ENCODE measurements at regions of chr4 and their contacts with region 1.

Region 1: DNA sequence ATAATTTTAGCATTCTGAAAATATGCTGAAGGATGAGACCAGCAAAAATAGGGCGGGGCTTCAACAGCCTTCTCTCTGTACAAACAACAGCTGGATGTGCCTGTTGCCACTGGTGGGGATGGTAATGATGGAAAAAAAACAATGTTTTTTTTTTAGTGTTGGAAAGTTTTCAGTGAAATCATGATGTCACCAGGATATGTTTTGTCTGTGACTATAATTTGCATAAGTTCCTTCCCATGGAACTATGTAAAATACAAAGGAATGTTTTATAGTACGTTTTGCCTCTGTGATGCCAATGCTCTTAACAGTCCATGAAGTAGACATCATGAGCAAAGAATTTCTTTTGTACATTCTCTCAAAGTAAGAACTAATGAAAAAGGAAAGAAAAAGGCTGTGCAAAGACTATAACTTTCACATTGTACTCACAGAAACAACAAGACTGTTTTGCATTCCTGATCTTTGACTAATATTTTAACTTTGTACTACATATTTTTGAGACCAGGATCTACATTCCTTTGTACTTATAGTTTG is 589.7 kb downstream of the SPRY1 start:
- DNase-seq: peak; percentile 99
- H3K4me3 ChIP-seq: no peak overlapping the region
- H3K27ac ChIP-seq: peak overlapping the region; percentile 98
- H3K4me1 ChIP-seq: peaks cover 41% of the 10 kb centered on the region
- H3K27me3 ChIP-seq: no peaks in the 10 kb centered on the region
- CTCF ChIP-seq: no peak
- POLR2A ChIP-seq: no peak

Region 2: DNA sequence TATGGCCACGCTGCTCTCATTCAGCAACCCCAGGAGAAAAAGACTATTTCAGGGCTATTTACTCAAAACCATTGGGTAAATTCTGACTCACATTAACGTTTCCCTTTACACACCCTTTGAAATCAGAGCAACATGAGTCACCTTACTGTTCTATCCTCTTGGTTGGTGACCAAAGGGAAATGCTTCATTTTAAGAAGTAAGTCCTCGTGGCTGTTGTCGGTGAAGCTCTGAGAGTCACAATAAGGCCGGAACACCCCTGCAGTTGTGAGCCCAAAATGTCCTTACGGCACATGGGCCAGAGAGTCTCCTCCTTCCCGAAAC is 646.0 kb before region 1 on chr4:
- CTCF ChIA-PET with region 1: no interaction called
- POLR2A ChIA-PET with region 1: no interaction called
- dilution Hi-C with region 1: no loop called
- intact Hi-C with region 1: loop called (anchors 1 kb)
- DNase-seq: peak; percentile 92
- H3K4me3 ChIP-seq: no peak overlapping the region
- H3K27ac ChIP-seq: peak overlapping the region; percentile 90
- H3K4me1 ChIP-seq: peaks cover 58% of the 10 kb centered on the region
- H3K27me3 ChIP-seq: no peaks in the 10 kb centered on the region
- CTCF ChIP-seq: no peak
- POLR2A ChIP-seq: peak; percentile 29

Region 3: GRCh38 chr4:123616951-123617461 is 369.3 kb before region 1 on chr4:
- CTCF ChIA-PET with region 1: no interaction called
- POLR2A ChIA-PET with region 1: no interaction called
- dilution Hi-C with region 1: no loop called
- intact Hi-C with region 1: loop called (anchors 1 kb)
- DNase-seq: peak; percentile 81
- H3K4me3 ChIP-seq: no peak overlapping the region
- H3K27ac ChIP-seq: no peak overlapping the region
- H3K4me1 ChIP-seq: peaks cover 19% of the 10 kb centered on the region
- H3K27me3 ChIP-seq: no peaks in the 10 kb centered on the region
- CTCF ChIP-seq: no peak
- POLR2A ChIP-seq: no peak

Region 4: GRCh38 chr4:123832173-123833026 is 153.9 kb before region 1 on chr4:
- CTCF ChIA-PET with region 1: no interaction called
- POLR2A ChIA-PET with region 1: no interaction called
- dilution Hi-C with region 1: no loop called
- intact Hi-C with region 1: loop called (anchors 1 kb)
- DNase-seq: peak; percentile 86
- H3K4me3 ChIP-seq: no peak overlapping the region
- H3K27ac ChIP-seq: peak overlapping the region; percentile 93
- H3K4me1 ChIP-seq: peaks cover 38% of the 10 kb centered on the region
- H3K27me3 ChIP-seq: no peaks in the 10 kb centered on the region
- CTCF ChIP-seq: no peak
- POLR2A ChIP-seq: peak; percentile 24

Region 5: DNA sequence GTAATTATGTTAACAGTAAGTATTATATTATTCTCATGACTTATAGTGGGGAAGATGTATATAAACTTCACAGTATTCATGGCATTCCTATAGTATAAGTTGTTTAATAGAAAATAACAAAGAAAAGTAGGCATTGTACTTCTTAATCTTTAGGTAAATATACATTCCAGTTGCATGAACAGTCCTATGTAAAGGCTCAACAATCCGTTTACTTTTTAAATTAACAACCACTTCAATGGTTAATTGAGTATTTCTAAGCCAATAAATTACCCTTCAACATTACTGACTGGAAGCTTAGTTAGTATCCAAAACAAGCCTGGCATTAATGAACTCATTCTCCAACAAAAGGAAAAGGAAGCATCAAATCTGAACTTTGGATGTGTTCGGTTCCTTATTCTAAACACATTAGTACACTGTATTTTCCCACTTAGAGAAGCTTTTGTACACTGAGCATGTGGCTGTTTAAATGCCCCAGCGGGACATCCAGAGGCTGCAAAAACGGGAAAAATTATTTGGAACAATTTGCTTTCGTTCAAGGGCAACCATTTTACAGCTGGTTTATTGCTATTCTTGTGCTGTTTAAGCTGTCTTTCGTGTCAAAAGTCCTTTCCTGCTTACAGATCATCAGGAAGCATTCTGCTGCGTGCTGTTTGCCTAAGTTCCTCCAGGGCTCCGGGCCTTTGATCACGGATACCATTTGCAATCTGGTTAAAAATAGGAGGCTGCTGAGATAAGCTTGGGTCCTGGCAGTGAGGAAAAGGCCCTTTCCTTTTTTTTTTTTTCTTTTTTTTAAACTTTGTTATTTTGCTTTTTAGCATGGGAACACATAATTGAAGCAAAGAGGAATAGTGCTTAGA is 129.4 kb before region 1 on chr4:
- CTCF ChIA-PET with region 1: no interaction called
- POLR2A ChIA-PET with region 1: no interaction called
- dilution Hi-C with region 1: no loop called
- intact Hi-C with region 1: no loop called
- DNase-seq: peak; percentile 90
- H3K4me3 ChIP-seq: peak overlapping the region in 1 of 3 experiments; percentile 36
- H3K27ac ChIP-seq: peak overlapping the region; percentile 82
- H3K4me1 ChIP-seq: peaks cover 20% of the 10 kb centered on the region
- H3K27me3 ChIP-seq: no peaks in the 10 kb centered on the region
- CTCF ChIP-seq: peak in 1 of 2 donors; percentile 28
- POLR2A ChIP-seq: no peak

Region 6: DNA sequence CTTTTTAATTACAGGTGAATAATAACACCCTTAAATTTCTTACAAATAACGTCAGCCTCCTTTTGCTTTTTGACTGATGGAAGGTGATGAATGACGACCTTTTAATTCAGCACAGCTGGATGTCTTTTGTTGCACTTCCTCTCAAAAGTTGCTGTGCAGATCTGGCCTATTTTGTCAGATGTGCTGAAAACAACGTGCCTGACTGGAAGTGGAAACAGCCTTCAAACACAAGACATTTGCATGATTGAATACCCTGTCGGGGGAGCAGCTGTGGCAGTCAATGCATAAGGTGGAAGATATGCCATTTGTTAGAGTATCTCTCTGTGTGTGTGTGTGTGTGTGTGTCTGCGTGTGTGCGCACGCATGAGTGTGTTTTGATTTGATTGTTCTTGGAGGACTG is 10.0 kb before region 1 on chr4:
- CTCF ChIA-PET with region 1: no interaction called
- POLR2A ChIA-PET with region 1: no interaction called
- dilution Hi-C with region 1: no loop called
- intact Hi-C with region 1: loop called (anchors 1 kb)
- DNase-seq: peak; percentile 90
- H3K4me3 ChIP-seq: no peak overlapping the region
- H3K27ac ChIP-seq: peak overlapping the region; percentile 70
- H3K4me1 ChIP-seq: peaks cover 30% of the 10 kb centered on the region
- H3K27me3 ChIP-seq: no peaks in the 10 kb centered on the region
- CTCF ChIP-seq: no peak
- POLR2A ChIP-seq: no peak

Region 7: DNA sequence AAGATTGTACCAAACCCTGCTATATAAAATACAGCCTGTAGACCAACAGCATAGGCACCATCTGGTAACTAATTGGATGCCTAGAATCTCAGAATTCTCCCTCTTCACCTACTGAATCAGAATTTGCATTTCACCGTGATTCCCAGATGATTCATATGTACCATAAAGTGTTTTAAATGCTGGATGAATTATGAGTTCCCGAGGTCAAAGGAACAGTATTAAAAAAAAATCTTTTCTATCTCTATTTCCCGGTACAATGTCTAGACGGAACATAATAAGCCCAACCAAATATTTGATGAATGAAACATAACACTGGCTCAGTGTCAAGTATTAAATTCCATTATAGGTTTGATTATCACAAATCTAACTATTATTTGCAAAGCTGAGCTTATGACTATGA is 446.2 kb after region 1 on chr4:
- CTCF ChIA-PET with region 1: no interaction called
- POLR2A ChIA-PET with region 1: no interaction called
- dilution Hi-C with region 1: no loop called
- intact Hi-C with region 1: loop called (anchors 1 kb)
- DNase-seq: peak; percentile 94
- H3K4me3 ChIP-seq: peak overlapping the region in 1 of 3 experiments; percentile 24
- H3K27ac ChIP-seq: peak overlapping the region; percentile 100
- H3K4me1 ChIP-seq: peaks cover 75% of the 10 kb centered on the region
- H3K27me3 ChIP-seq: no peaks in the 10 kb centered on the region
- CTCF ChIP-seq: no peak
- POLR2A ChIP-seq: no peak

Measured in endothelial cell of umbilical vein (primary cell).